PC-3 (cell line): ENCODE measurements at regions of chr1 and their contacts with region 1.

Region 1: GRCh38 chr1:167803358-167804207 is 81.8 kb downstream of the MPZL1 start:
- DNase-seq: peak; percentile 98
- ATAC-seq: peak; percentile 100
- H3K4me3 ChIP-seq: no peak overlapping the region
- H3K27ac ChIP-seq: no peak overlapping the region
- H3K4me1 ChIP-seq: no peaks in the 10 kb centered on the region
- H3K27me3 ChIP-seq: no peaks in the 10 kb centered on the region
- CTCF ChIP-seq: peak; percentile 99

Region 2: DNA sequence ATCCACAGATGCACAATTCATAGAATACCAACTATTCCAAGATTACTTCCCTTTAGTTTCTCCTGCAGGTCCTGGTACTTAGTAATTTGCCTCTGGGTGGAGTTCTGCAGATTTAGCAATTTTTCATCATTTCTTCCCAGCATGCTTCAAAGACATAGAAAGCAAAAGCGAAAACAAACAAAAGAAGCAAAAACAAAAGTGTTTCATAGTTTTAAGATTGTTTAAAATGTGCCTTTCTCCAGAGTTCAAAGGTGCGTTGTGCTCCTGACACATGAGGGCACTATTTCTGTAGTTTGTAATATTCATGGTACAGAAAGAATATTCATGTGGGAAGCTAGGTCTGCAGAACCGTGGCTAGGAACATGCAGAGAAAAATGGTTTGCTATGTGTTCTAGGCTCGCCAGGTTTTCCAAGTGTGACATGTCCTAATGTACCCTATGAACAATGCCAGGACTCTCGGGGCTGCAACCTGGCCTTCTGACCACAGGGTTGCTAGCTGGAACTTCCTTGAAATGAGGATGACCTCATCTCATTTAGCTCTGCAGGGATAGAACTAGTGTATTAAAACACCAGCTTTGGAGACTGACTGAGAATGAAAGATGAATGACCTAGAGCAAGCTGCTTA is 203.5 kb before region 1 on chr1:
- CTCF ChIA-PET with region 1: no interaction called
- POLR2A ChIA-PET with region 1: no interaction called
- intact Hi-C with region 1: loop called (anchors 1 kb)
- DNase-seq: peak; percentile 58
- ATAC-seq: peak; percentile 88
- H3K4me3 ChIP-seq: no peak overlapping the region
- H3K27ac ChIP-seq: no peak overlapping the region
- H3K4me1 ChIP-seq: no peaks in the 10 kb centered on the region
- H3K27me3 ChIP-seq: peaks cover 12% of the 10 kb centered on the region
- CTCF ChIP-seq: peak; percentile 82

Region 3: GRCh38 chr1:167687919-167688519 is 115.6 kb before region 1 on chr1:
- CTCF ChIA-PET with region 1: no interaction called
- POLR2A ChIA-PET with region 1: no interaction called
- intact Hi-C with region 1: loop called (anchors 1 kb)
- DNase-seq: peak; percentile 97
- ATAC-seq: peak; percentile 56
- H3K4me3 ChIP-seq: no peak overlapping the region
- H3K27ac ChIP-seq: no peak overlapping the region
- H3K4me1 ChIP-seq: peaks cover 13% of the 10 kb centered on the region; the same call in 1 of the 2 replicates
- H3K27me3 ChIP-seq: 0 out of 2 replicates have a peak, but pooled peaks cover 8% of the 10 kb centered on the region
- CTCF ChIP-seq: peak; percentile 96

Region 4: GRCh38 chr1:167715157-167715999 is 88.2 kb before region 1 on chr1:
- CTCF ChIA-PET with region 1: interaction called, 14 read pairs
- POLR2A ChIA-PET with region 1: no interaction called
- intact Hi-C with region 1: loop called (anchors 1 kb)
- DNase-seq: peak; percentile 97
- ATAC-seq: peak; percentile 45
- H3K4me3 ChIP-seq: peak overlapping the region; percentile 85
- H3K27ac ChIP-seq: 0 out of 2 replicates have a peak overlapping the region, but pooled peaks have one; percentile 11
- H3K4me1 ChIP-seq: peaks cover 6% of the 10 kb centered on the region; the same call in 1 of the 2 replicates
- H3K27me3 ChIP-seq: no peaks in the 10 kb centered on the region
- CTCF ChIP-seq: peak; percentile 94

Region 5: DNA sequence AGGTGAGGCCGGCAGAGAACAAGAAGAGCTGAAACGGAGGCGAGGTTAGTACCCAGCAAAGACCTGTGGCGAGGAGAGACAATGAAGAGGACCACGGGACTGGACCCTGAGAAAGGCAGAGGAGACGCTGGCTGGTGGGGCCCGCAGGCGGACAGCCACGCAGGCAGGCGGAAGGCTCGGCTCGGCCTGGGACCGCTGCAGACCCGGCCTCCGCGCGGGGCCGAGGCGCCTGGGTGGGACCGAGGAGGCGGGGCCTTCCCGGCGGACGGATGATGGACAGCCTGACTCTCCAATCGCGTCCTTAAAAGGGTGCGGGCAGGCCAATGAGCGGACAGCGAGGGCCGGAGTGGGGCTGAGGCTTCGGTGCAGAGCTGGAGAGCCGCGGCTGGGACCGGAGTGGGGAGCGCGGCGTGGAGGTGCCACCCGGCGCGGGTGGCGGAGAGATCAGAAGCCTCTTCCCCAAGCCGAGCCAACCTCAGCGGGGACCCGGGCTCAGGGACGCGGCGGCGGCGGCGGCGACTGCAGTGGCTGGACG is 81.9 kb before region 1 on chr1 and contains the start of gene MPZL1:
- CTCF ChIA-PET with region 1: interaction called, 14 read pairs
- POLR2A ChIA-PET with region 1: no interaction called
- intact Hi-C with region 1: loop called (anchors 1 kb)
- DNase-seq: peak; percentile 98
- ATAC-seq: peak; percentile 94
- H3K4me3 ChIP-seq: peak within 1 kb of the TSS; percentile 76
- H3K27ac ChIP-seq: peak within 1 kb of the TSS; percentile 35
- H3K4me1 ChIP-seq: peaks cover 24% of the 10 kb centered on the region
- H3K27me3 ChIP-seq: no peaks in the 10 kb centered on the region
- CTCF ChIP-seq: no peak
- total RNA-seq, gene MPZL1: 86.5 and 95.1 TPM in 2 replicates

Region 6: DNA sequence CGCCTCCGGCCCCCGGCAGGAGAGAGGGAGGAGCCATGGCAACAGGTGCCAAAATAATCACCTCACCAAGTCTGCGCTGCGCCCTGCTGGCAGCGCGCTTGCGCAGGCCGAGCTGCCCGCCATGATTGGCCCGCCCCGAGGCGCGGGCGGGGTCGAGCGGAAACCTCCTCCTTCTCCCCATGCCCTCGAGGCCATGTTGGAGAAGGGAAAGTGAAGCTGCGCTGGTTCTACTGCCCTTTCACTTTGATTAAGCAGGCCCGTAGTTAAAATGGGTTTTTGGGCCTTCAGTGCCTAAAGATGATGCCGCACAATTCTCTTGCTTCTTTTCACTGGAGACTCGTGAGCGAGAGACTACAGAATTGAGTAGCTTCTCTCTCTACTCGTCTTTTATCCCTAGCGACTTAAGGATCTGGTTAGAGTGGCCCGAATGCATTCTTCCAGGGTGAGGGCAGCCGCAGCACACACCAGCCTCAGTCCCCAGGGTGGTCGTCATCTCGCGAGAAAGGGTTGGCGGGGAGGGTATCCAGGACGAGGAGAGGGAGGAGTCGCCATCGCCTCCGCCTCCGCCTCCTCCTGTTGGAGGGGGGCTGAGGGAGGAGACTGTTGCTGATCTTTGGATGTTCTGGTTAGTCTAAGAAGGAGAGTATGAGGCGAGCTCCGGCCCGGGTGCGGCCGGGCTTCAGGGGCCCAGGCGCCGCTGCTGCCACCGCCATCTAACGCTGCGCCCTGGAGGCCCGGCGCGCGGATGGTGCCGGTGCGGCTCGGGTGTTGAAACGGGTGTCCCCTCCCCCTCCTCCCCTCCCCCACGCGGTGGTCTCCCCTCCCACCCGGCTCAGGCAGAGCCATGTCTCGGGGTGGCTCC is 132.7 kb after region 1 on chr1 and contains the start of gene DCAF6:
- CTCF ChIA-PET with region 1: interaction called, 4 read pairs
- POLR2A ChIA-PET with region 1: no interaction called
- intact Hi-C with region 1: loop called (anchors 1 kb)
- DNase-seq: peak; percentile 100
- ATAC-seq: peak; percentile 71
- H3K4me3 ChIP-seq: peak within 1 kb of the TSS; percentile 79
- H3K27ac ChIP-seq: peak within 1 kb of the TSS; percentile 88
- H3K4me1 ChIP-seq: peaks cover 22% of the 10 kb centered on the region
- H3K27me3 ChIP-seq: no peaks in the 10 kb centered on the region
- CTCF ChIP-seq: no peak
- total RNA-seq, gene DCAF6: 29.1 and 52.2 TPM in 2 replicates